Endothelial cell of umbilical vein (primary cell): ENCODE measurements at regions of chrX and their contacts with region 1.

Region 1: GRCh38 chrX:104113222-104113965 is 1.1 kb downstream of the ZCCHC18 start:
- DNase-seq: peak; percentile 52
- H3K4me3 ChIP-seq: peak overlapping the region; percentile 67 to 76 (median 70)
- H3K27ac ChIP-seq: peak overlapping the region; percentile 72
- H3K4me1 ChIP-seq: peaks cover 12% of the 10 kb centered on the region
- H3K27me3 ChIP-seq: no peaks in the 10 kb centered on the region
- CTCF ChIP-seq: peak; percentile 39 to 40
- POLR2A ChIP-seq: no peak

Region 2: GRCh38 chrX:104098151-104098808 is 15.1 kb before region 1 on chrX:
- CTCF ChIA-PET with region 1: interaction called, 13 read pairs
- POLR2A ChIA-PET with region 1: no interaction called
- dilution Hi-C with region 1: no loop called
- intact Hi-C with region 1: loop called (anchors 1 kb)
- DNase-seq: peak; percentile 74
- H3K4me3 ChIP-seq: no peak overlapping the region
- H3K27ac ChIP-seq: no peak overlapping the region
- H3K4me1 ChIP-seq: no peaks in the 10 kb centered on the region
- H3K27me3 ChIP-seq: no peaks in the 10 kb centered on the region
- CTCF ChIP-seq: peak in 1 of 2 donors; percentile 33
- POLR2A ChIP-seq: no peak

Region 3: DNA sequence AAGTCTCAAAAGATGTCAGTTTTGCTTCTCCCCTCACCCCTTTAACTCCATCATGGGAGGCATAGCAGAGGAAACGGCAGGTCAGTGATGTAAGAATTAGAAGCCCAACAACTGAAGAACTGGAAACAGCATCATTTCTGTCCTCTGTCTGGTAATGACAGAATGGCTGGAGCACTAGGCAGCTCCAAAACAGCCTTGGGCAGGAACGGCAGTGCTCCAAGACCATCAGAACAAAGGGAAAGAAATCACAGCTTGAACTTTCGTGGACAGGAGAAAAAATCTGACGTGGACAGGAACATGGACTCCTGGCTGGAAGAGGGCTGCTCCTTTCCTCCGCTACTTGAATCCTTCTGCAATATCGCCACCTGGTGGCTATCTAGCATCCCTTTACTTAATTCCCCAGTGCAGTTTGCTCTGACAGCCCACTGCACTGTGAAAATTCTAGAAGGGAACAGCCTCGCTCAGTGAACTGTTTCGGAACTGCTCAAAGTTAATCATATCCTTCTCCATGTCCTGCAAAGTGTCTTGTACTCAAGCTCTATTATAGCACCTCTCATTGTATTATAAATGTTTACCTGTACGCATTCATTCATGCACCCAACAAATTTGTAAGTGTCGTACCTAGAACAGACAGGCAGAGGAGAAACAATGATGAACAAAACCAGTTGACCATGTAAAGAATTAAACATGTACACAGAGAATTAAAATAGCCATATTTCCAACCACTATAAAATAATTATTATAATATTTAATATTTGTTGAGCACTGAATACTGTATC is 23.0 kb after region 1 on chrX:
- CTCF ChIA-PET with region 1: interaction called, 6 read pairs
- POLR2A ChIA-PET with region 1: no interaction called
- dilution Hi-C with region 1: no loop called
- intact Hi-C with region 1: loop called (anchors 1 kb)
- DNase-seq: peak; percentile 73
- H3K4me3 ChIP-seq: peak overlapping the region in 2 of 3 experiments; percentile 16 to 19
- H3K27ac ChIP-seq: no peak overlapping the region
- H3K4me1 ChIP-seq: no peaks in the 10 kb centered on the region
- H3K27me3 ChIP-seq: no peaks in the 10 kb centered on the region
- CTCF ChIP-seq: peak; percentile 54 to 55
- POLR2A ChIP-seq: no peak

Region 4: GRCh38 chrX:104156630-104157529 is 43.5 kb after region 1 on chrX and contains the start of gene SLC25A53:
- CTCF ChIA-PET with region 1: interaction called, 7 read pairs
- POLR2A ChIA-PET with region 1: no interaction called
- dilution Hi-C with region 1: no loop called
- intact Hi-C with region 1: loop called (anchors 2 kb)
- DNase-seq: peak; percentile 82
- H3K4me3 ChIP-seq: peak within 1 kb of the TSS; percentile 68 to 99 (median 97)
- H3K27ac ChIP-seq: peak within 1 kb of the TSS; percentile 84
- H3K4me1 ChIP-seq: peaks cover 5% of the 10 kb centered on the region
- H3K27me3 ChIP-seq: no peaks in the 10 kb centered on the region
- CTCF ChIP-seq: no peak
- POLR2A ChIP-seq: no peak
- total RNA-seq, gene SLC25A53: 5.7 and 6.3 TPM in 2 replicates

Region 5: DNA sequence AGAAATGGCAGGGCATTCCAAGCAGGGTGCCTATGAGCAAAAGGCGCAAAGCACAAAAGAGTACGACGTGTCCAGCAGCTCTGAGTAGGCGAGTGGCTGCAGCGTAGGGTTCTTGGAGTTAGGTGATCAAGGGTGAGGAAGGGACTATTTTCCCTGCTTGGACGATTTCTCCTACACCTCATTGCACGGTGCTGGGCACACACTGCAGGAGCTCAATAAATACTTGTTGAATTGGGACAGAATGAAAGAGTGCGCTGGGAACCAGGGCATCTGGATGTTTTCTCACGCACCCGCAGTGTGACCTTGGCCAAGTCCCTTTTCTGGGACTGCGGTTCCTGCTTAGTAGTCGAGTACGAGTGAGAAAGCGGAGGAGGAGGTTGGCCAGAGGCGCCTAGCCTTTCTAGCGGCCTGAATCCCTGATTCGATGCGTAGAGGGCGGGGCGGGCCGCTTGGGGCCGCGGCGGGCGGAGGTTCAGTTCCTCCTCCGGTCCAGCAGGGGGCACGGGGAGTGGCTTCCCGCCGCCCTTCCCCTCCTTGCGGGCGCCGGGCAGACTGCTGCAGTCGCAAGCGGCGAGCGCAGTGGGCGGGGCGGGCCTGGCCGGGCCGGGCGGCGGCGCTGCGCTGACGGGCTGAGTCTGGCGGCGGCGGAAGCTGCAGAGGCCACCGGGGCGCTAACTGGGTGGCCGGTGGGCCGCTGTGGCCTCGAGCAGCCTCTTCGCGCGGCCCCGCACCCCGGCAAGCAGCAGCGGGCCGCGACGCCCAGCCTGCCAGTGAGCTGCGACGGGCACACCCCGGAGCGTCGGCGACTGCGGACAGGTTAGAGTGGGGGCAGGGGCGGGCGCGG is 52.7 kb after region 1 on chrX and contains the start of gene FAM199X:
- CTCF ChIA-PET with region 1: no interaction called
- POLR2A ChIA-PET with region 1: no interaction called
- dilution Hi-C with region 1: no loop called
- intact Hi-C with region 1: loop called (anchors 1 kb)
- DNase-seq: peak; percentile 91
- H3K4me3 ChIP-seq: peak within 1 kb of the TSS; percentile 70 to 98 (median 88)
- H3K27ac ChIP-seq: peak within 1 kb of the TSS; percentile 78
- H3K4me1 ChIP-seq: peaks cover 12% of the 10 kb centered on the region
- H3K27me3 ChIP-seq: no peaks in the 10 kb centered on the region
- CTCF ChIP-seq: peak; percentile 60 to 64
- POLR2A ChIP-seq: peak; percentile 55
- total RNA-seq, gene FAM199X: 16.8 and 18.1 TPM in 2 replicates

Region 6: DNA sequence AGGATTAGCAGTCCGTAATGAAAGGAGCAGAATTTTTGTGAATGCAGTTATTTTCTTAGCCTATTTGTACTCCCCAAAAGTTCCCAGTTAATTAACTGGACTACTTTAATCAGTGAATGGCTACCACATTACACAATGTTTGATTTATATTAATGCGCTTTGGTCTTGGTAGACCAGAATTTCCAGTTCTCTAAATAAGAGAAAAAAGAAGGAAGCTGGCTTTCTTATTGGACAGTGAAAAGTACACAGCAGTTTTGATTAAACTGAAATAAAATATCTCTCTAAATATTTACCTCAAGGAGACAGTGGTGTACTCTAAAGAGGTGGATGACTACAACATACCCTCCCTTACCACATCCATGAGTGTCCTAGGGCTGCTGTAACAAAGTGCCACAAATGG is 1389.9 kb after region 1 on chrX:
- CTCF ChIA-PET with region 1: no interaction called
- POLR2A ChIA-PET with region 1: no interaction called
- dilution Hi-C with region 1: no loop called
- intact Hi-C with region 1: no loop called
- DNase-seq: no peak
- H3K4me3 ChIP-seq: no peak overlapping the region
- H3K27ac ChIP-seq: no peak overlapping the region
- H3K4me1 ChIP-seq: no peaks in the 10 kb centered on the region
- H3K27me3 ChIP-seq: no peaks in the 10 kb centered on the region
- CTCF ChIP-seq: no peak
- POLR2A ChIP-seq: no peak